ENCODE measurements at regions of chr7 and their contacts with region 1.

Region 1: DNA sequence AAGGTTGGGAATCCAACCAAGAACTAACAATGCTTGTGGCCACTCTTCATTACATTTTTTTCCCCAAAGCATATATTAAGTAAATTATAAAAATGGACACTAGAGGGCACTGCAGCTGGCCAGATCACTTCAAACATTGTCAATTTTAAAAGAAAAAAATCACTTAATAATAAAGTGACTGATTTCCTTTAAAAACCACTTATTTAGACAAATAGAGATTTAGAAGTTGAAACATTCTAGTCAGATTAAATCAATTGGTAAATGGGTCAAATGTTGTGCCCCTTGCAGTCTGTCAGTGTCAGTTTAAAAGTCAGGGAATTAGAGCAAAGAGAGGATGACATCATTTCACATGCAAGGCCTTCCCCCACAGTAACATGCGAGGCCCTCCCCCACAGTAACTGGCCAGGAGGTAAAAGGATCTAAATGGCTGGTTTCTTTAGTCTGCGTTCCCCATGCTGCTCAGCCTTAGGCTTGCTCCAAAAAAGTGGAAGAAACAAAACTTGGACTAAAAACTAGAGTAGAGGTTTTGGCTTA is 177.9 kb downstream of the SKAP2 start:
- DNase-seq: no peak
- ATAC-seq: peak; percentile 56
- H3K4me3 ChIP-seq: no peak overlapping the region
- H3K27ac ChIP-seq: no peak overlapping the region
- H3K4me1 ChIP-seq: peaks cover 14% of the 10 kb centered on the region; the same call in 1 of the 2 replicates
- H3K27me3 ChIP-seq: no peaks in the 10 kb centered on the region
- CTCF ChIP-seq: peak; percentile 32 to 48 (median 45); a peak in 5 of 6 replicates
- EP300 ChIP-seq: no peak
- POLR2A ChIP-seq: no peak
- RAD21 ChIP-seq: peak; percentile 63

Region 2: DNA sequence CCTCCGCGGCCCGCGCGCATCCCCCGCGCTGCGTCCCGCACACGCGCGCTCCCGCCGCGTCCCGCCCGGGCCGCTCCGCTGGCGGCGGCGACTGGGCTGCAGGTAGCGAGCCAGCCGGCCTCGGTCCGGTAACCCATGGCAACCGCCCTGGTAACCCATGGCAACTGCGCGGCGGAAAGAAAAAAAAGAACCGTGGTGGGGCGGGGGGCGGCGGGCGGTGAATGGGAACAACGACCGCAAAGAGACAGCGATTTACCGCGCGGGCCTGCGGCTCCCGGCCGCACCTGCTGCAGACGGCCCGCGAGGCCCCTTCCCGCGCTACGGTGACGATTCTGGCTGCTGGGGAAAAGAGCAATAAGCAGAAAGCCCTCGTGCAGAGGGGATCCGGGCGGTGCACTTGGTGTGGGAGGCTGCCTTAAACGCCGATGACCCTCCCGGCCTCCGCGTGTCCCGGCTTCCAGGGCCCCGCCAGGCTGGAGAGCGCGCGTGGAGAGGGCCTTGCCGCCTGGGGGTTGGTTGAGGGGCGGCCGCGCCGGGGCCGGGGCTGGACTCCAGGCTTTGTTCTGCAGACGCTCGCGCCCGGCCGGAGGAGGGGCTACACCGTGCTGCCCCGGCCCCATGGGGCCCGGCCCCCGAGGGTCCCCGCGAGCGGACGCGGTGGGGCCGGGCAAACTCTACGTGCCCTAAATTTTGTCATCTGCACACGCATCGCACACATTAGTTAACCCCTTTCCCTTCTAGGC is 310.2 kb before region 1 on chr7:
- CTCF ChIA-PET with region 1: interaction called, 12 read pairs
- POLR2A ChIA-PET with region 1: no interaction called
- RAD21 ChIA-PET with region 1: no interaction called
- SMC1A ChIA-PET with region 1: interaction called, 5 read pairs
- in situ Hi-C with region 1: no loop called
- intact Hi-C with region 1: no loop called
- DNase-seq: no peak
- ATAC-seq: peak; percentile 71
- H3K4me3 ChIP-seq: peak overlapping the region; percentile 63
- H3K27ac ChIP-seq: no peak overlapping the region
- H3K4me1 ChIP-seq: peaks cover 7% of the 10 kb centered on the region
- H3K27me3 ChIP-seq: no peaks in the 10 kb centered on the region
- CTCF ChIP-seq: no peak
- EP300 ChIP-seq: no peak
- POLR2A ChIP-seq: no peak
- RAD21 ChIP-seq: no peak

Region 3: DNA sequence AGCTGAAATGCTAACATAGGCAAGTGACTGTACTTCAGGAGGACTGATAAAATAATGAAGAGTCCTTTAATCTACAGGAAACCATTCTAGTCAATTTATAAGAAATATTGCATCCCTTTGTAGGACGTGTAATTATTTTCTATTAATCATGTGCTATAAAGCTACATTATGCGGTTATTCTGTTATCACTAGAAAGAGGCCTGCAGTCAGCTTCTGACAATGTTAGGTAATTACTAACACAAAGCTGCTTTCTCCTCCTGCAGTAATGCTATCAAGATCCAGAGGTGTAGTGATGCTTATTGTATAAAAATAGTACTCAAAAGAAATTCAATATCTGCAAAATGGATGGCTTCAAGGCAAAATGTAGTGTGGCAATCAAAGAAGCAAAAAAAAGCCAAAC is 13.2 kb before region 1 on chr7:
- CTCF ChIA-PET with region 1: interaction called, 15 read pairs
- POLR2A ChIA-PET with region 1: no interaction called
- RAD21 ChIA-PET with region 1: interaction called, 7 read pairs
- SMC1A ChIA-PET with region 1: interaction called, 6 read pairs
- in situ Hi-C with region 1: no loop called
- intact Hi-C with region 1: no loop called
- DNase-seq: no peak
- ATAC-seq: no peak
- H3K4me3 ChIP-seq: no peak overlapping the region
- H3K27ac ChIP-seq: no peak overlapping the region
- H3K4me1 ChIP-seq: no peaks in the 10 kb centered on the region
- H3K27me3 ChIP-seq: no peaks in the 10 kb centered on the region
- CTCF ChIP-seq: no peak
- EP300 ChIP-seq: no peak
- POLR2A ChIP-seq: no peak
- RAD21 ChIP-seq: no peak

Region 4: DNA sequence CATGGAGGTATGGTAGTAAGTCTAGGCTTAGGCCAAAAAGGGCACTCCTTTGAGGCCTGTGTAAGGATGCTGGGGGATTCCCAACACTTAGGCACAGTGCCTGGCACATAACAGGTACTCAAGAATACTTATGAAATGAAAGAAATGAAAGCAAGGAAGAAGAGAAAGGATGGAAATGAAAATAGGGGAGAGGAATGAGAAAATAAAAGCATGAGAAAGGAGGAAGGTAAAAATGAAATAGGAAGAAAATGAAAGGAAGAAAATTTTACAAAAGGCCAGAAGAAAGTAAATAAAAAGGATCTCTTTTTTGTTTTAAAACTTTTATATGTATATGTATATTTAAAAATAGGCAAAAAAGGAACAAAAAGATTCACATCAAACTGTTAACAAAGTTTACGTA is 31.5 kb after region 1 on chr7:
- CTCF ChIA-PET with region 1: interaction called, 10 read pairs
- POLR2A ChIA-PET with region 1: no interaction called
- RAD21 ChIA-PET with region 1: no interaction called
- SMC1A ChIA-PET with region 1: interaction called, 5 read pairs
- in situ Hi-C with region 1: no loop called
- intact Hi-C with region 1: no loop called
- DNase-seq: no peak
- ATAC-seq: no peak
- H3K4me3 ChIP-seq: no peak overlapping the region
- H3K27ac ChIP-seq: no peak overlapping the region
- H3K4me1 ChIP-seq: no peaks in the 10 kb centered on the region
- H3K27me3 ChIP-seq: no peaks in the 10 kb centered on the region
- CTCF ChIP-seq: no peak
- EP300 ChIP-seq: no peak
- POLR2A ChIP-seq: no peak
- RAD21 ChIP-seq: no peak

Region 5: GRCh38 chr7:27150568-27151340 is 464.2 kb after region 1 on chr7:
- CTCF ChIA-PET with region 1: interaction called, 21 read pairs
- POLR2A ChIA-PET with region 1: no interaction called
- RAD21 ChIA-PET with region 1: interaction called, 10 read pairs
- SMC1A ChIA-PET with region 1: interaction called, 4 read pairs
- in situ Hi-C with region 1: no loop called
- intact Hi-C with region 1: no loop called
- DNase-seq: no peak
- ATAC-seq: peak; percentile 96
- H3K4me3 ChIP-seq: peak overlapping the region; percentile 67
- H3K27ac ChIP-seq: no peak overlapping the region
- H3K4me1 ChIP-seq: no peaks in the 10 kb centered on the region; the same call in 1 of the 2 replicates
- H3K27me3 ChIP-seq: peaks cover 20 to 60% of the 10 kb centered on the region in 2 experiments
- CTCF ChIP-seq: peak; percentile 70 to 84 (median 74)
- EP300 ChIP-seq: no peak
- POLR2A ChIP-seq: no peak; the same call in 1 of the 2 replicates
- RAD21 ChIP-seq: peak; percentile 30; the same call in 1 of the 2 replicates

Region 6: GRCh38 chr7:27210441-27211083 is 524.0 kb after region 1 on chr7:
- CTCF ChIA-PET with region 1: no interaction called
- POLR2A ChIA-PET with region 1: no interaction called
- RAD21 ChIA-PET with region 1: no interaction called
- SMC1A ChIA-PET with region 1: no interaction called
- in situ Hi-C with region 1: no loop called
- intact Hi-C with region 1: no loop called
- DNase-seq: no peak
- ATAC-seq: peak; percentile 74
- H3K4me3 ChIP-seq: no peak overlapping the region
- H3K27ac ChIP-seq: no peak overlapping the region
- H3K4me1 ChIP-seq: no peaks in the 10 kb centered on the region
- H3K27me3 ChIP-seq: peaks cover 3 to 28% of the 10 kb centered on the region in 2 experiments
- CTCF ChIP-seq: peak; percentile 55 to 72 (median 67)
- EP300 ChIP-seq: no peak
- POLR2A ChIP-seq: no peak
- RAD21 ChIP-seq: peak; percentile 38; the same call in 1 of the 2 replicates

Region 7: GRCh38 chr7:27277619-27278018 is 591.1 kb after region 1 on chr7:
- CTCF ChIA-PET with region 1: no interaction called
- POLR2A ChIA-PET with region 1: no interaction called
- RAD21 ChIA-PET with region 1: no interaction called
- SMC1A ChIA-PET with region 1: no interaction called
- in situ Hi-C with region 1: no loop called
- intact Hi-C with region 1: no loop called
- DNase-seq: no peak
- ATAC-seq: no peak
- H3K4me3 ChIP-seq: no peak overlapping the region
- H3K27ac ChIP-seq: no peak overlapping the region
- H3K4me1 ChIP-seq: no peaks in the 10 kb centered on the region
- H3K27me3 ChIP-seq: no peaks in the 10 kb centered on the region
- CTCF ChIP-seq: no peak
- EP300 ChIP-seq: no peak
- POLR2A ChIP-seq: no peak
- RAD21 ChIP-seq: no peak

Measured in GM12878 (cell line).